Heart right ventricle (tissue), 16 donors: ENCODE measurements at regions of chr7 and their contacts with region 1.

Region 1: DNA sequence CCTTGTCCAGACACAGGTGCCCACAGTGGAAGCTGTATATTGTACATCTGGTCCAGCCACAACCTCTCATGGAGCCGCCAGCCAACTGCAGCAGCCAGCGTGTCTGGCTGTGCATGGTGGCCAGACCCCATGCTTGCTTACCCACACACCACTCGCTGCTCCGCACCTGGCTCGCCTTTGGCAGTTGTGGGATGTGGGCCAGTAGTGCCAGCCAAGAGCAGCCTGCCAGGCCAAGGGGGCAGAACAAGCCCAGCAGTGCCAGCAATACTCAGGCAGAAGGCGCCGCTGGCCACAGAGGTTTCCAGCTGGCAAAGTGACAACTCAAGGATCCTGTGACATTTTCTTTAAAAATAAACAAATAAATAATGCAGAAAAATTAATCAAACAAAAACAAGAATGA is 11.7 kb upstream of the TMEM243 start:
- DNase-seq: peak; percentile 28 to 55
- ATAC-seq: peak; percentile 55 to 84 (median 77)
- H3K4me3 ChIP-seq: no peak overlapping the region
- H3K27ac ChIP-seq: no peak overlapping the region
- H3K4me1 ChIP-seq: peaks cover 0 to 12% (median 0%) of the 10 kb centered on the region in 9 donors
- H3K27me3 ChIP-seq: peaks cover 0 to 6% (median 0%) of the 10 kb centered on the region in 7 donors
- CTCF ChIP-seq: no peak

Region 2: DNA sequence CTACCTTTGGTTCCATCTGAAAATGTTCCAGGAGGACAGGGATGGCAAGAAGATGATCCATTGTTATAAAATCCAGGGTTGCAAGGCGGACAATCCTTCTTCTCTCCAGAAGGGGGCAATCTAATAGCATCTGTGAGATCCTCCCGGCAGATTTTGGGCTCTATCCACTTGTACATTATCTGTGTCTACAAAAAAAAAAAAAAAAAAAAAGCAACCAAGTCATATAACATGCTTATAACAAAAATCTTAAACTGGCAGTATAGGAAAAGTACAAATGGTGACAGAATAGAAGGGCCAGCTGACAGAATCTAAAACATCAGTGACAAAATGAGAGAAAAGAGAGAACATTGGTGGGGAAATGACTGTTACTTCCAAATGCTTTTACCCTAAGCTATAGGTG is 304.5 kb before region 1 on chr7:
- intact Hi-C with region 1: loop called in 6 of 10 experiments (anchors 5 to 10 kb)
- DNase-seq: no peak
- ATAC-seq: peak in 1 of 8 donors; percentile 42
- H3K4me3 ChIP-seq: no peak overlapping the region
- H3K27ac ChIP-seq: no peak overlapping the region
- H3K4me1 ChIP-seq: peaks cover 0 to 6% (median 2%) of the 10 kb centered on the region in 9 donors
- H3K27me3 ChIP-seq: no peaks in the 10 kb centered on the region
- CTCF ChIP-seq: peak; percentile 38 to 78 (median 67)

Region 3: DNA sequence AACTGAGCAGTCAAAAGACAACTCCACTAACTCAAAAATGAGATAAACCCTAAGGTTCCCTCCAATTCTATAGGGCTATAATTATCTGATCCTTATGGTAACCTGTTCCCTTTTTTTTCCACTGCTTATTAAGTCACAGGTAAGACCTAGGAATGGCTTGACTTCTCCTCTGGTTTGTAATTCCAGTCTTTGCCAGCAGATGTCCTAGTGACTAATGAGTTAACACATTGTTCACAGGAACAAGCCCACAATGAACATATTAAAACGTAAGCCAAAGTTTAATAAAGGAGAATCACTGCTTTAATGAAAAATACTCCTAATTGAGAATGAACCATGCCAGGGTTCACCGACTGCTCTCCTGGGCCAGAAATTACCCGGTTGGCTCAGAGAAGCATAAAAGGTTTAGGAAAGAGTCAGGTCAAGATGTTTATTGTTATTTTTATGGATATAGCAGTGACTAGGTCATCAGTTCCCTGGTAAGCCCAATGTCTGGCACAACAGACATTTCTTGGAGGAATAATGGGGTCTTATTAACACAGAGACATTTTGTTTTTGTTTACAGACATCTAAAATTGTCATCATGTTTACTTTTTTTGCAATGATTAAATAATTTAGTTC is 291.9 kb before region 1 on chr7:
- intact Hi-C with region 1: loop called in 7 of 10 experiments (anchors 2 to 10 kb)
- DNase-seq: peak in 1 of 2 donors; percentile 66
- ATAC-seq: peak in 6 of 8 donors; percentile 43 to 73 (median 55)
- H3K4me3 ChIP-seq: no peak overlapping the region
- H3K27ac ChIP-seq: no peak overlapping the region
- H3K4me1 ChIP-seq: no peaks in the 10 kb centered on the region
- H3K27me3 ChIP-seq: no peaks in the 10 kb centered on the region
- CTCF ChIP-seq: peak; percentile 35 to 80 (median 73)